CD8-positive, alpha-beta T cell (primary cell): ENCODE measurements at regions of chr17 and their contacts with region 1.

Region 1: DNA sequence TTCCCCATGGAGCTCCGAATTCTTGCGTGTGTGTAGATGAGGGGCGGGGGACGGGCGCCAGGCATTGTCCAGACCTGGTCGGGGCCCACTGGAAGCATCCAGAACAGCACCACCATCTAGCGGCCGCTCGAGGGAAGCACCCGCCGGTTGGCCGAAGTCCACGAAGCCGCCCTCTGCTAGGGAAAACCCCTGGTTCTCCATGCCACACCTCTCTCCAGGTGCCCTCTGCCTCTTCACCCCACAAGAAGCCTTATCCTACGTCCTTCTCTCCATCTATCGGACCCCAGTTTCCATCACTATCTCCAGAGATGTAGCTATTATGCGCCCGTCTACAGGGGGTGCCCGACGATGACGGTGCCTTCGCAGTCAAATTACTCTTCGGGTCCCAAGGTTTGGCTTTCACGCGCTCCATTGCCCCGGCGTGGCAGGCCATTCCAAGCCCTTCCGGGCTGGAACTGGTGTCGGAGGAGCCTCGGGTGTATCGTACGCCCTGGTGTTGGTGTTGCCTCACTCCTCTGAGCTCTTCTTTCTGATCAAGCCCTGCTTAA is 617 bp upstream of the SENP3 start:
- DNase-seq: peak; percentile 67 to 89 (median 81)
- ATAC-seq: peak; percentile 68
- H3K4me3 ChIP-seq: peak overlapping the region; percentile 50 to 95
- H3K4me3 Mint-ChIP-seq: peak overlapping the region; percentile 94
- H3K27ac ChIP-seq: peak overlapping the region; percentile 91 to 97
- H3K27ac Mint-ChIP-seq: peak overlapping the region; percentile 99
- H3K4me1 ChIP-seq: peaks cover 49% of the 10 kb centered on the region
- H3K4me1 Mint-ChIP-seq: peaks cover 50% of the 10 kb centered on the region
- H3K27me3 ChIP-seq: no peaks in the 10 kb centered on the region
- H3K27me3 Mint-ChIP-seq: no peaks in the 10 kb centered on the region
- CTCF ChIP-seq: peak; percentile 85

Region 2: DNA sequence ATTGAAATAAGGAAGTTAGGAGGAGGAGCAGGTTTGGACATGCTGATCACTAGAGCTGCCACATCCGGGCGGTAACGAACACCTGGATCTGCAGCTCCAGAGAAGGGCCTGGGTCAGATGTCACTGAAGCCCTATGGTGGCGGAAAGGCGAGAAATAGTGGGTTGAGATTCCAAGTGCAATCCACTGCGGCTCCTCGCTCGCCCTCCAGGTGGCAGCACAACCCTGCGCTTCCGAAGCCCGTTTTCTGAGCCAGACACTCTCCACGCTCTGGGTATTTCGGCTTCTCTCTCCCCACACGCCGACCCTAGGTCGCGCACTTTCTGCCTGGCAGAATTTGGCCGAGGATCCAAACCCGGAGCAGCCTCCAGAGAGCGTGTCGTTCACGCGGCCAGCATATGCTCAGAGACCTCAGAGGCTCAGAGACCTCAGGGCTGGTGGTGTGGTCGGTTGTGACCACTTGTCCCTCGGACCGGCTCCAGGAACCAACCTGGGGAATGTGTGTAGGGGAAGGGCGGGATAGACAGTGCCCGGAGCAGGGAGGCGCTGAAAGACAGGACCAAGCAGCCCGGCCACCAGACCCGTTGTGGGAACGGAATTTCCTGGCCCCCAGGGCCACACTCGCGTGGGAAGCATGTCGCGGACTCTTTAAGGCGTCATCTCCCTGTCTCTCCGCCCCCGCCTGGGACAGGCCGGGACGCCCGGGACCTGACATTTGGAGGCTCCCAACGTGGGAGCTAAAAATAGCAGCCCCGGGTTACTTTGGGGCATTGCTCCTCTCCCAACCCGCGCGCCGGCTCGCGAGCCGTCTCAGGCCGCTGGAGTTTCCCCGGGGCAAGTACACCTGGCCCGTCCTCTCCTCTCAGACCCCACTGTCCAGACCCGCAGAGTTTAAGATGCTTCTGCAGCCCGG is 280.3 kb before region 1 on chr17:
- CTCF ChIA-PET with region 1: interaction called, 3 read pairs
- POLR2A ChIA-PET with region 1: no interaction called
- intact Hi-C with region 1: loop called (anchors 1 kb)
- DNase-seq: peak; percentile 76 to 92 (median 86)
- ATAC-seq: peak; percentile 88
- H3K4me3 ChIP-seq: peak overlapping the region; percentile 41 to 46
- H3K4me3 Mint-ChIP-seq: peak overlapping the region; percentile 73
- H3K27ac ChIP-seq: no peak overlapping the region
- H3K27ac Mint-ChIP-seq: no peak overlapping the region
- H3K4me1 ChIP-seq: peaks cover 25% of the 10 kb centered on the region
- H3K4me1 Mint-ChIP-seq: peaks cover 16% of the 10 kb centered on the region
- H3K27me3 ChIP-seq: peaks cover 0 to 26% of the 10 kb centered on the region in 2 experiments
- H3K27me3 Mint-ChIP-seq: peaks cover 9% of the 10 kb centered on the region
- CTCF ChIP-seq: peak; percentile 84

Region 3: GRCh38 chr17:7454980-7455379 is 106.1 kb before region 1 on chr17:
- CTCF ChIA-PET with region 1: interaction called, 7 read pairs
- POLR2A ChIA-PET with region 1: no interaction called
- intact Hi-C with region 1: loop called in 1 of 2 experiments (anchors 1 kb)
- DNase-seq: no peak
- ATAC-seq: peak; percentile 35
- H3K4me3 ChIP-seq: peak overlapping the region; percentile 82 to 83
- H3K4me3 Mint-ChIP-seq: peak overlapping the region; percentile 98
- H3K27ac ChIP-seq: peak overlapping the region; percentile 60 to 74
- H3K27ac Mint-ChIP-seq: peak overlapping the region; percentile 91
- H3K4me1 ChIP-seq: peaks cover 15% of the 10 kb centered on the region
- H3K4me1 Mint-ChIP-seq: peaks cover 24% of the 10 kb centered on the region
- H3K27me3 ChIP-seq: no peaks in the 10 kb centered on the region
- H3K27me3 Mint-ChIP-seq: no peaks in the 10 kb centered on the region
- CTCF ChIP-seq: no peak

Region 4: GRCh38 chr17:7509937-7510336 is 51.2 kb before region 1 on chr17:
- CTCF ChIA-PET with region 1: interaction called, 343 read pairs
- POLR2A ChIA-PET with region 1: interaction called, 21 read pairs
- intact Hi-C with region 1: loop called (anchors 1 kb)
- DNase-seq: no peak
- ATAC-seq: no peak
- H3K4me3 ChIP-seq: no peak overlapping the region
- H3K4me3 Mint-ChIP-seq: no peak overlapping the region
- H3K27ac ChIP-seq: no peak overlapping the region
- H3K27ac Mint-ChIP-seq: no peak overlapping the region
- H3K4me1 ChIP-seq: no peaks in the 10 kb centered on the region
- H3K4me1 Mint-ChIP-seq: peaks cover 2% of the 10 kb centered on the region
- H3K27me3 ChIP-seq: no peaks in the 10 kb centered on the region
- H3K27me3 Mint-ChIP-seq: no peaks in the 10 kb centered on the region
- CTCF ChIP-seq: no peak

Region 5: DNA sequence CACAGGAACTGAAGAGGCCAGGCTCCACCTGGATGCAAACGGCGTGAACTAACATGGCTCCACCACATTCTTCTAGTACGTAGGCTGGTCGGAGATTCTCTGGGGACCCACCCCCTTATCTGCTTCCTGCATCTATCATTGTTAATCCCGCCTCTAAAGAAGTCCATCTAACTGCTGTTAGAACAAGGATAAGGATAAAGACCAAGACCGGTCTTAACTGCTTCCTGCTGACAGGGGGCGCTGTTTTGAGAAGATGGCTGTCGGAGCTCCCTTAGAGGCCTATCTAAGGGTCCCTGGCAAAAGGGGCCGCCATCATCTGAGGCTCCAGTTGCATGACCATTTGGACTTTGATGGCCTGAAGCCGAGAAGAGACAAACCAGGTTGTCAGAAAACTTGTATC is 38.1 kb before region 1 on chr17:
- CTCF ChIA-PET with region 1: interaction called, 343 read pairs
- POLR2A ChIA-PET with region 1: interaction called, 5 read pairs
- intact Hi-C with region 1: loop called (anchors 1 kb)
- DNase-seq: peak in 8 of 9 experiments; percentile 16 to 73 (median 56)
- ATAC-seq: peak; percentile 75
- H3K4me3 ChIP-seq: no peak overlapping the region
- H3K4me3 Mint-ChIP-seq: no peak overlapping the region
- H3K27ac ChIP-seq: no peak overlapping the region
- H3K27ac Mint-ChIP-seq: no peak overlapping the region
- H3K4me1 ChIP-seq: no peaks in the 10 kb centered on the region
- H3K4me1 Mint-ChIP-seq: peaks cover 3% of the 10 kb centered on the region
- H3K27me3 ChIP-seq: no peaks in the 10 kb centered on the region
- H3K27me3 Mint-ChIP-seq: no peaks in the 10 kb centered on the region
- CTCF ChIP-seq: peak; percentile 66

Region 6: DNA sequence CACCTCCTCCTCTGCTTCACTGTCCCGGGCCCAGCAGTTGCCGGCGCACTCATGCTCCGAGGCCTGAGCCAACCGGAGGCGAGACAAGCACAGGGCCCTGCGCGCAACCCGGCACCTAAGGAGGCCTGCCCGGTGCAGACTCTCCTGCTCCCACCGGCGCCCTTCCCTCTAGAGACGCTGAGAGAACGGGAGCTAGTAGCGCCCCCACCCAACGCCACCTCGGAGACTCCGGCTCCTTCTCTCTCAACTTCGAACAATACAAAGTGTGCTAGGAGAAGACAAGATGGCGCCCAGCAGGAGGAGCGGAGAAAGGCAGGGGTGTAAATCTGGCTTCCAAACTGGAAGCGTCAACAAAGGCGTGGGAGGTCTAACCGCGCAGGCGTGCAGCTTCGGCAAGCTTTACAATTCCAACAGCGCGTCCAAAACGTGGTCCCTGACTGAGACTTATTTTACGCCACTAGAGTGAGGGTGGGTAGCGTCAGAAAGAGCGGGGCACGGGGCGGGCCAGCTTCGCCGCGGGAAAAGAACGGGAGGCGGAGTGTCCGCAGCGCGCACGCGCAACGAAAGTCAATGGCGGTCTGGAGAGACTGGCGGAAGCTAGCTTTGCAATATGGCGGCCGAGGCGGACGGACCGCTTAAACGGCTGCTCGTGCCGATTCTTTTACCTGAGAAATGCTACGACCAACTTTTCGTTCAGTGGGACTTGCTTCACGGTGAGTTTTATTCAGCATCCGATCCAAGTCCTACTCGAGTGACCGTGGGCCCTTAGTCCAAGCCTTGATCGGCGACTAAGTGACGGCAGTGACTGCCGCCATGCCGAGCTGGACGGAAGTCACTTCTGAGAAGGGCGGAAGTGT is 22.4 kb after region 1 on chr17 and contains the start of gene MPDU1:
- CTCF ChIA-PET with region 1: interaction called, 35 read pairs
- POLR2A ChIA-PET with region 1: interaction called, 7 read pairs
- intact Hi-C with region 1: loop called (anchors 1 kb)
- DNase-seq: peak; percentile 85 to 98 (median 94)
- ATAC-seq: peak; percentile 83
- H3K4me3 ChIP-seq: peak within 1 kb of the TSS; percentile 90 to 93
- H3K4me3 Mint-ChIP-seq: peak within 1 kb of the TSS; percentile 100
- H3K27ac ChIP-seq: peak within 1 kb of the TSS; percentile 92 to 99
- H3K27ac Mint-ChIP-seq: peak within 1 kb of the TSS; percentile 100
- H3K4me1 ChIP-seq: peaks cover 40% of the 10 kb centered on the region
- H3K4me1 Mint-ChIP-seq: peaks cover 47% of the 10 kb centered on the region
- H3K27me3 ChIP-seq: no peaks in the 10 kb centered on the region
- H3K27me3 Mint-ChIP-seq: no peaks in the 10 kb centered on the region
- CTCF ChIP-seq: no peak
- total RNA-seq, gene MPDU1: 16.6 to 17.2 TPM

Region 7: DNA sequence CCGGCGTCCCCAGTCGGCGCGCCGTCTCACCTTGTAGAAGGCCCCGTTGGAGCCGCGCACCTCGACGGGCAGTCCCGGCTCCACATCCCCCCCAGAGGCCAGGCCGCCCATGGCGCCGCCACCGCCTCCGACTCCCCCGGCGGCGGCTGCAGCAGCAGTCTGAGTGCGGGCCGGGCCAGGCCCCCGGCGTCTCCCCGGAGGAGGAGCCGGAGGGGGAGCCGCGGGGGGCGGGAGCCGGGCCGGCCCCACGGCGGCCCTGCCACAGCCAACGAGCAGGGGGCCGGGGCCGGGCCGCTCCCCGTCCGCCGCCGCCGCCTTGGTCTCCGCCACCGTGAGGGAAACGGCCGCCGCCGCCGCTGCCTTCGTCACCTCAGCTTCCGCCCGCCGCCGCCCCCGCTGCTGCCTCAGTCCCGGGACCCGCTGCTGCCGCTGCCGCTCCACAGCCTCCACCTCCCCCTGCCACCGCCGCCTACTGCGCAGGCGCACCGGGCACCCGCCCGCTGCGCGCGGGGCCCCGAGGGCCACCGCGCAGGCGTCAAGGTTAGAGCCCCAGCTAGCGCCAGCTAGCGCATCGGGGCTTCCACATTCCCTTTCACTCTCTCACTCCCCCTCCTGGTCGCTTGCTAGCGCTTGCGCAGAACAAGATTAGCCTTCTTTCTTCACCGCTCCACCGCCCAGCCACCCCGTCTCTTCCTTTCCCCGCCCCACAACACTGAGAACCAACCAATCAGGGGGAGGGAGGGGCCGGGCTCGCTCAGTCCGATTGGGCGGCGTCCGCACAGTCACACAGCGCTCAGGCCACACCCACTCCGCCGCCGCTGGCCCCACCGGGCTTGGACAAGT is 53.5 kb after region 1 on chr17 and contains the start of gene FXR2:
- CTCF ChIA-PET with region 1: interaction called, 6 read pairs
- POLR2A ChIA-PET with region 1: interaction called, 6 read pairs
- intact Hi-C with region 1: loop called in 1 of 2 experiments (anchors 2 kb)
- DNase-seq: peak; percentile 96 to 100 (median 98)
- ATAC-seq: peak; percentile 87
- H3K4me3 ChIP-seq: peak within 1 kb of the TSS; percentile 78 to 86
- H3K4me3 Mint-ChIP-seq: peak within 1 kb of the TSS; percentile 89
- H3K27ac ChIP-seq: peak within 1 kb of the TSS; percentile 70 to 89
- H3K27ac Mint-ChIP-seq: peak within 1 kb of the TSS; percentile 96
- H3K4me1 ChIP-seq: peaks cover 30% of the 10 kb centered on the region
- H3K4me1 Mint-ChIP-seq: peaks cover 38% of the 10 kb centered on the region
- H3K27me3 ChIP-seq: no peaks in the 10 kb centered on the region
- H3K27me3 Mint-ChIP-seq: no peaks in the 10 kb centered on the region
- CTCF ChIP-seq: peak; percentile 39
- total RNA-seq, gene FXR2: 18.8 to 21.7 TPM